Activated T-helper 2 cell treated with anti-CD3 and anti-CD28 coated beads, Interferon-gamma antibody, Interleukin-2, Interleukin-4, amounts not matched to agents 10 μg/mL and 5 μg/mL and 100 μg/mL, durations not matched to agents 14 hours and 24 hours and 36 hours (primary cell): ENCODE measurements at regions of chr1 and their contacts with region 1.

Region 1: DNA sequence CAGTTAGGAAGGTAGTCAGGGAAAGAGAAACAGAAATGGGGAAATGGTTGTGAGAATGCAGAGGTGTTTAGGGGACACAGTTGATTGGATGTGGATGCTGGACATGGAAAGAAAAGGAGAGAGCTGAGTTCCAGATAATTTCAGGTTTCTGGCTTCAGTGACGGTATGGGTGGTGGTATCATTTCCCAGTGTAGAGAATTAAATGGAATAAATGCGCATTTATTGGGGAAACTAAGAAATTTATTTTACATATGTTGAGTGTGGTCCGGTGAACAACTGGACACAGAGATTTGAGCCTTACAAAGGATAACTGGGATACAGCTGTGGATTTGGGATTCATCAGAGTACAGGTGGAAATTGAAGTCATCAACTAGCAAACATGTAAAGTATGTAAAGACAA is 12.4 kb upstream of the ZNF281 start:
- DNase-seq: no peak
- H3K4me3 Mint-ChIP-seq: no peak overlapping the region
- H3K27ac Mint-ChIP-seq: no peak overlapping the region
- H3K4me1 Mint-ChIP-seq: no peaks in the 10 kb centered on the region
- H3K27me3 Mint-ChIP-seq: peaks cover 15% of the 10 kb centered on the region

Region 2: DNA sequence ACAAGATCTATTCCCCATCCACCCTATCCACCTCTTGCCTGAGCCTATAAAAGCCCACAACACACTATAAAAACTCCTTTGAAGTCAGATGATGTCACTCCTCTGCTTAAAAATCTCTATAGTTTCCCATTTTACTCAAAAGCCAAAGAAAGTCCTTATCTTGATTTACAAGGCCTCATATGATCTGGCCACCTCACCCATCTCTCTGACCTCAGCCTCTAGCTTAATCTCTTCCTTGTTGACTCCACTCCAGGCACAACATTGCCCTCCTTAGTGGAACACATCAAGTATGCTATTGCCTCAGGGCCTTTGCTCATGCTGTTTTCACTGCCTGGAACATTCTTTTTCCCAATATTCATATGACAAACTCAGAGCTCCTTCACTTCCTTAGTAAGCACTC is 45.7 kb before region 1 on chr1:
- intact Hi-C with region 1: loop called (anchors 1 kb)
- DNase-seq: no peak
- H3K4me3 Mint-ChIP-seq: no peak overlapping the region
- H3K27ac Mint-ChIP-seq: no peak overlapping the region
- H3K4me1 Mint-ChIP-seq: peaks cover 19% of the 10 kb centered on the region
- H3K27me3 Mint-ChIP-seq: peaks cover 2% of the 10 kb centered on the region

Region 3: GRCh38 chr1:200488375-200489165 is 66.4 kb after region 1 on chr1:
- intact Hi-C with region 1: no loop called
- DNase-seq: no peak
- H3K4me3 Mint-ChIP-seq: no peak overlapping the region
- H3K27ac Mint-ChIP-seq: no peak overlapping the region
- H3K4me1 Mint-ChIP-seq: peaks cover 11% of the 10 kb centered on the region
- H3K27me3 Mint-ChIP-seq: peaks cover 37% of the 10 kb centered on the region